PC-9 (cell line): ENCODE measurements at regions of chr16 and their contacts with region 1.

Region 1: GRCh38 chr16:69581297-69581696 is 15.5 kb downstream of the NFAT5 start:
- DNase-seq: no peak
- H3K4me3 ChIP-seq: no peak overlapping the region
- H3K27ac ChIP-seq: no peak overlapping the region
- H3K4me1 ChIP-seq: no peaks in the 10 kb centered on the region
- H3K27me3 ChIP-seq: no peaks in the 10 kb centered on the region
- CTCF ChIP-seq: no peak

Region 2: DNA sequence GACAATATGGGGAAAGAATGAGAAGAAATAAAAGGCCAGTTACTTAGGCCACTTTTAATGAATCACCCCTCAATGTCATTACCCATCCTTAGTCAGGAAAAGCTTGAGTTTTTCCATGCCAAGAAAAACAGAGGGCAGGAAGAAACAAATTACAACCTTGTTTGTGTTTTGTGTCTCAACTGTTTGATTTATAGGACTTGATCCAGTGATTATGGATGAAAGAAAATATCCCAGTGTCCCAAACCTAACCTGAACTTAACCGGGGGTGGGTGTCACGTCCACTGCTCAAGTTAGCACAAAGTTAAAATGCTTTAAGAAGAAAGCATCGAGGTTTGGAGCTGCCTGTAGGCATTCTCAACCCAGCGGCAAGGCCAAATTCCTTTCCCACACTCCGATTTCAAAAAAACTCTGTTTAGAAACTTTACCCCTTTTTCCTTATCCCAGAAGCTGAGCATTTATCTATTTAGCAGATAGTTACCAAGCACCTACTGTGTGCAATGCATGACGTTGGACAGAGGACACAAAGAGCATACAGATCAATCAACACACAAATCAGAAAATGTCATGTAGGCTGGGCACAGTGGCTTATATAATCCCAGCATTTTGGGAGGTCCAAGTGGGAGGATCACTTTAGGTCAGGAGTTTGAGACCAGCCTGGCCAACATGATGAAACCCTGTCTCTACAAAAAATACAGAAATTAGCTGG is 170.9 kb before region 1 on chr16:
- CTCF ChIA-PET with region 1: interaction called, 10 read pairs
- POLR2A ChIA-PET with region 1: no interaction called
- intact Hi-C with region 1: no loop called
- DNase-seq: peak in 1 of 2 experiments; percentile 93
- H3K4me3 ChIP-seq: no peak overlapping the region
- H3K27ac ChIP-seq: peak overlapping the region; percentile 81
- H3K4me1 ChIP-seq: peaks cover 53% of the 10 kb centered on the region
- H3K27me3 ChIP-seq: no peaks in the 10 kb centered on the region
- CTCF ChIP-seq: no peak